ENCODE measurements at regions of chr18 and their contacts with region 1.

Region 1: GRCh38 chr18:49819823-49820671 is 6.7 kb upstream of the ACAA2 start:
- DNase-seq: peak in 8 of 9 donors; percentile 30 to 78 (median 68)
- ATAC-seq: peak; percentile 89
- H3K4me3 ChIP-seq: peak overlapping the region; percentile 21
- H3K4me3 Mint-ChIP-seq: peak overlapping the region; percentile 63 to 87 (median 76)
- H3K27ac ChIP-seq: peak overlapping the region; percentile 50
- H3K27ac Mint-ChIP-seq: peak overlapping the region; percentile 66 to 94 (median 88)
- H3K4me1 ChIP-seq: peaks cover 38 to 44% of the 10 kb centered on the region in 2 donors
- H3K4me1 Mint-ChIP-seq: peaks cover 45 to 71% (median 66%) of the 10 kb centered on the region in 7 donors
- H3K27me3 ChIP-seq: no peaks in the 10 kb centered on the region
- H3K27me3 Mint-ChIP-seq: no peaks in the 10 kb centered on the region

Region 2: DNA sequence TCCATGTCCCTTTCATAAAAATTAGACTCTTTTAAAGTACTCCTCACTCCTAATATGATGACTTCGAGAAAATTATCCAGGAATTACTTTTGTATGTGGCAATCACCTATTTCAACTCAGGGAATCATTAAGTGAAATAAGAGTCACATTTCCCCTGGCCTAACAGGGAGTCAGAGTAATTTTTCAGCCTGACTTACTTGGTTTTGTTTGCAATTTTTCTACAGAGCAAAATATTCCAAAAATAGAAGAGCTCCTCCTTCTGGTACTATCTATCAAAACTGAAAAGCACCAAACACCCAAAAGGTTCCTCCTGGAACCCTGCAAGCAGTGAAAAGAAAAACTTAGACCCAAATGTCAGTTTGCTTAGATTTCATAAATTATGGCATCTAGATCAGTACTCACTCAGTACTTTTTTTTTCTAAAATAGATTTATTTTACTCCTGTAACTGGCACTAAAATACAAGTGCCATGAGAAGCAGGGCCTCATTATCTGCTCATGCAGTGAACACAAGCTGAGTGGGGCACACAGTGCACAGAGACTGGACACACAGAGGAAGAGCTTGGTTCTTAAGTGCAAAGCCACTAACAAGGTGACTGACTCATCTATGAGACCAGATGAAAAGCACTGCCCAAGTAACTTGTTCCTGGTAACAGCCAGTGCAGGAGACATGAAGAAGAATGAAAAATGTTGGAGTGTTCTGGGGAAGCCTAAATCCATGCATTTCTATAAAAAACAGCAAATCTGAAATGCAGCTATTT is 35.4 kb before region 1 on chr18:
- CTCF ChIA-PET with region 1: interaction called, 3 read pairs
- POLR2A ChIA-PET with region 1: no interaction called
- intact Hi-C with region 1: loop called in 1 of 2 experiments (anchors 1 kb)
- DNase-seq: no peak
- ATAC-seq: no peak
- H3K4me3 ChIP-seq: no peak overlapping the region
- H3K4me3 Mint-ChIP-seq: peak overlapping the region in 5 of 10 donors; percentile 12 to 64 (median 30)
- H3K27ac ChIP-seq: no peak overlapping the region
- H3K27ac Mint-ChIP-seq: peak overlapping the region in 3 of 9 donors; percentile 29 to 48 (median 31)
- H3K4me1 ChIP-seq: peaks cover 12 to 46% of the 10 kb centered on the region in 2 donors
- H3K4me1 Mint-ChIP-seq: peaks cover 27 to 52% (median 42%) of the 10 kb centered on the region in 7 donors
- H3K27me3 ChIP-seq: no peaks in the 10 kb centered on the region
- H3K27me3 Mint-ChIP-seq: no peaks in the 10 kb centered on the region

Measured in naive thymus-derived CD4-positive, alpha-beta T cell (primary cell).